HAP-1 (cell line): ENCODE measurements at regions of chr10 and their contacts with region 1.

Region 1: DNA sequence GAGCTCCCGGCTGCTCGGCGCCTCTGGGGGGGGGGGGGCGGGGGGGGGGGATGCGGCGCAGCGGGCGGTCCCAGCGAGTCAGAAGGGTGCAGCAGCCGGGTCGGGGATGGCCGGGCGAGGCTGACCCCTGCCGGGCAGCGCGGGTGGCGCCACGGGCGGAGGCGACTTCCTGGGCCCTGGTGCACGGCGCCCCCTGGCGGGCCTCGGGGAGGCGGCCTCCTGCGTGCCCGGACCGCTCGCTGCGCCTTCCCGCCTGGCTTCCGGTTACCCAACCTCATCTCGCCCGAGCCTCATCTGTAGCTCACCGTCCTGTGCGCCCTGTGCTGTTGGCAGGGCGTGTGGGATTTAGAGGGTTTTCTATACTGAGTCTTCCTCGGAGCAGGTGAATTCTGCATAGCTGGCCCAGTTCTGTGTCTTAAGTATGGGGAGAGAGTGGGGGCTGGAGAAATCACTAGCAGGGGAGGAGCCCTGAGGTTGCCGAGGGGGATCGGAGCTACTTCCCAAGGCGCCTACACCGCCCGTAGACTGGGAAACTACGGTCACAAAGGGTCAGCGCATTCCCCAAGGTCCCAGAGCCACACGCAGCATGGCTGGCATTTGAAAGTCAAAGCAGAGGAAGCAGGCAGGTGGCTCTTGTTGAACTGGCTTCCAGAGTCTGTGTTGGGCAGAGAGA is 28.3 kb upstream of the WDFY4 start:
- DNase-seq: peak; percentile 60 to 90
- H3K4me3 ChIP-seq: peak overlapping the region; percentile 25
- H3K4me1 ChIP-seq: peaks cover 3% of the 10 kb centered on the region; the same call in 1 of the 2 replicates
- H3K27me3 ChIP-seq: no peaks in the 10 kb centered on the region

Region 2: DNA sequence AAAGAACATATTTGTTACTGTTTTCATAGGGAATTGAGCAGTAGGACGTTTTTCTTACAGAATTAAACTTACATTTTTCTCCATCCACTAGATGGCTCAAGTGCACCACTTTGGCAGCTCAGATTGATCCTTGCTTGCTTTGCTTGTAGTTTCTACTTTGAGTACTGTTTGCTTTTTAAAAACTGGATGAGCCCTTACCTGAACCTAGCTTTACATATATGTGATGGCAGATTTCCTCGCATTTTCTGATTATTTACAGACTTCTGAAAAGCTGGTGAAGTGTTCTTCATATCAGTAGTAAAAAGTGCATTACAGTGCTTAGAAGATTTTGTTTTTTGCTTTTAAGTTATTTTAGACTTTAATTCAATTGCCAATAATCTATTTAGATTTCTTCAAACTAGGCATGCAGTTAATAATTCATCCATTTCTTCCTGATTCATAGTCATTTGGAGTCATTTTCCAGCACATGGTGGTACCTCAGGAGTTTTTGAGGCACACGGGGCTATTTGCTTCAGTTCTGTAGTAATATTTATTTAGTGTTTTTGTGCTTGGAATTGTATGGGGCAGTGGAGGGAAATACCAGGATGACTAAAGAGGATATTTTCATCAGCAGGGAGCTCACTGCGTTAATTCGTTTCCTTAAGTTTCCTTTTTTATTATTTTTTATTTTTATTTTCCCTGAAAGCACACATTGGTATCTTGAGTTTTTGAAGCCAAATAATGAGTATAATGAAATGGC is 292.6 kb before region 1 on chr10:
- in situ Hi-C with region 1: loop called (anchors 5 kb)
- DNase-seq: peak; percentile 43 to 47
- H3K4me3 ChIP-seq: no peak overlapping the region
- H3K4me1 ChIP-seq: no peaks in the 10 kb centered on the region; the same call in 1 of the 2 replicates
- H3K27me3 ChIP-seq: no peaks in the 10 kb centered on the region

Region 3: DNA sequence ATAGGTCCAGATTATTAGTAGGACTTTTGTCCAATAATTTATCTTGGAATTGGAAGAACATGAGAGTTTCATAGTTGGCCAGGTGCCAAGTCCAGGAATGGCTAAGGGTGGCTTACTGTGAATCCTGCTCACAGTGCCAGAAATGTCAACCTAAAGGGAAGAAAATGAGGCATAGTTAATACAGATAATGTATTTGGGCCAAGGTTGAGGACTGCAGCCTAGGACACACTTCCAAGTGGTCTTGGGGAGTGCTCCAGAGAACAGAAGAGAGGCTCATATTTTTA is 271.7 kb before region 1 on chr10:
- in situ Hi-C with region 1: no loop called
- DNase-seq: no peak
- H3K4me3 ChIP-seq: no peak overlapping the region
- H3K4me1 ChIP-seq: peaks cover 3% of the 10 kb centered on the region; the same call in 1 of the 2 replicates
- H3K27me3 ChIP-seq: no peaks in the 10 kb centered on the region

Region 4: DNA sequence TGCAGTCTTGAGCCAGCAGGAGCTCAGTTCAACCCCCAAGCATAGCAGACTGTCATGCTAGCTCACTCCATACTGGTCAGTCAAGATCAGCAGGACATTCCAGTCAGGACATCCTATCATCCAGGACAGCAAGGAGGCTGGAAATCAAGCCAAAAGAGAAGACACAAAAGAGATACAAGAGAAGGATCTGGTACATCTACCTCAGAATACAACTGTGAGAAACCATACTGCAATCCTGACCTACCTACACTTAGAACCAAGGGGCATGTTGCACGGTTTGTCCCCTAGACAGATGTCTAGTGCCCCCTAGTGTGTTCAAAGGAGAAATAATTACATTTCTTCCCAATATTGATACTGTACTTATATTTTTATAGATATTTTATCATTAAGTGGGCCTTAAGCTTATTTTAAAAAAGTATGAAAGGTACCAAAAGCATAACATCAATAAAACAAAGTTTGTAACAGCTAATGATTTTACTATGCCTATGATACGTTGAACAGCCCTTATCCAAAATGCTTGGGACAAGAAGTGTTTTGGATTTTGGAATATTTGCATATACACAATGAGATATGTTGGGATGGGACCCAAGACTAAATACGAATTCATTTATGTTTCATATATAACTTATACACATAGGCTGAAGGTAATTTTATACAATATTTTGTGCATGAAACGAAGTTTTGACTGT is 855.9 kb after region 1 on chr10:
- in situ Hi-C with region 1: loop called (anchors 5 kb)
- DNase-seq: peak in 1 of 2 experiments; percentile 44
- H3K4me3 ChIP-seq: no peak overlapping the region
- H3K4me1 ChIP-seq: peaks cover 11% of the 10 kb centered on the region
- H3K27me3 ChIP-seq: no peaks in the 10 kb centered on the region; the same call in 1 of the 2 replicates